GM12878 (cell line): ENCODE measurements at regions of chr3 and their contacts with region 1.

Region 1: GRCh38 chr3:184543843-184544512 is 17.6 kb upstream of the EPHB3 start:
- DNase-seq: no peak
- ATAC-seq: peak; percentile 88
- H3K4me3 ChIP-seq: no peak overlapping the region
- H3K27ac ChIP-seq: no peak overlapping the region
- H3K4me1 ChIP-seq: no peaks in the 10 kb centered on the region
- H3K27me3 ChIP-seq: peaks cover 0 to under 1% of the 10 kb centered on the region in 2 experiments; a peak in 2 of 4 replicates
- CTCF ChIP-seq: peak; percentile 74 to 83 (median 81)
- EP300 ChIP-seq: no peak
- POLR2A ChIP-seq: no peak
- RAD21 ChIP-seq: peak; percentile 73

Region 2: GRCh38 chr3:184171562-184172287 is 372.3 kb before region 1 on chr3:
- CTCF ChIA-PET with region 1: no interaction called
- POLR2A ChIA-PET with region 1: no interaction called
- RAD21 ChIA-PET with region 1: no interaction called
- SMC1A ChIA-PET with region 1: no interaction called
- in situ Hi-C with region 1: no loop called
- intact Hi-C with region 1: no loop called
- DNase-seq: no peak
- ATAC-seq: no peak
- H3K4me3 ChIP-seq: no peak overlapping the region
- H3K27ac ChIP-seq: no peak overlapping the region
- H3K4me1 ChIP-seq: peaks cover 5% of the 10 kb centered on the region
- H3K27me3 ChIP-seq: no peaks in the 10 kb centered on the region
- CTCF ChIP-seq: no peak
- EP300 ChIP-seq: no peak
- POLR2A ChIP-seq: no peak
- RAD21 ChIP-seq: no peak

Region 3: GRCh38 chr3:184371570-184372018 is 172.4 kb before region 1 on chr3:
- CTCF ChIA-PET with region 1: interaction called, 31 read pairs
- POLR2A ChIA-PET with region 1: no interaction called
- RAD21 ChIA-PET with region 1: interaction called, 14 read pairs
- SMC1A ChIA-PET with region 1: interaction called, 10 read pairs
- in situ Hi-C with region 1: no loop called
- intact Hi-C with region 1: loop called (anchors 1 kb)
- DNase-seq: no peak
- ATAC-seq: peak; percentile 99
- H3K4me3 ChIP-seq: no peak overlapping the region
- H3K27ac ChIP-seq: no peak overlapping the region
- H3K4me1 ChIP-seq: no peaks in the 10 kb centered on the region
- H3K27me3 ChIP-seq: peaks cover 0 to 6% of the 10 kb centered on the region in 2 experiments; a peak in 2 of 4 replicates
- CTCF ChIP-seq: peak; percentile 83 to 97 (median 97); a peak in 5 of 6 replicates
- EP300 ChIP-seq: no peak
- POLR2A ChIP-seq: no peak
- RAD21 ChIP-seq: peak; percentile 86

Region 4: GRCh38 chr3:184417619-184418327 is 126.2 kb before region 1 on chr3:
- CTCF ChIA-PET with region 1: no interaction called
- POLR2A ChIA-PET with region 1: no interaction called
- RAD21 ChIA-PET with region 1: no interaction called
- SMC1A ChIA-PET with region 1: no interaction called
- in situ Hi-C with region 1: no loop called
- intact Hi-C with region 1: loop called (anchors 5 kb)
- DNase-seq: peak; percentile 8
- ATAC-seq: peak; percentile 100
- H3K4me3 ChIP-seq: no peak overlapping the region
- H3K27ac ChIP-seq: no peak overlapping the region
- H3K4me1 ChIP-seq: no peaks in the 10 kb centered on the region
- H3K27me3 ChIP-seq: no peaks in the 10 kb centered on the region
- CTCF ChIP-seq: peak; percentile 88 to 95 (median 90)
- EP300 ChIP-seq: no peak
- POLR2A ChIP-seq: no peak
- RAD21 ChIP-seq: peak; percentile 77

Region 5: GRCh38 chr3:184469423-184469822 is 74.6 kb before region 1 on chr3:
- CTCF ChIA-PET with region 1: interaction called, 4 read pairs
- POLR2A ChIA-PET with region 1: no interaction called
- RAD21 ChIA-PET with region 1: no interaction called
- SMC1A ChIA-PET with region 1: interaction called, 3 read pairs
- in situ Hi-C with region 1: no loop called
- intact Hi-C with region 1: loop called (anchors 5 kb)
- DNase-seq: no peak
- ATAC-seq: peak; percentile 78
- H3K4me3 ChIP-seq: no peak overlapping the region
- H3K27ac ChIP-seq: no peak overlapping the region
- H3K4me1 ChIP-seq: no peaks in the 10 kb centered on the region
- H3K27me3 ChIP-seq: peaks cover 3 to 6% of the 10 kb centered on the region in 2 experiments; a peak in 3 of 4 replicates
- CTCF ChIP-seq: peak; percentile 40 to 59 (median 48)
- EP300 ChIP-seq: no peak
- POLR2A ChIP-seq: no peak
- RAD21 ChIP-seq: peak; percentile 31; the same call in 1 of the 2 replicates

Region 6: GRCh38 chr3:184777336-184778004 is 233.5 kb after region 1 on chr3:
- CTCF ChIA-PET with region 1: interaction called, 4 read pairs
- POLR2A ChIA-PET with region 1: no interaction called
- RAD21 ChIA-PET with region 1: interaction called, 3 read pairs
- SMC1A ChIA-PET with region 1: interaction called, 3 read pairs
- in situ Hi-C with region 1: no loop called
- intact Hi-C with region 1: loop called (anchors 1 kb)
- DNase-seq: peak; percentile 30
- ATAC-seq: peak; percentile 98
- H3K4me3 ChIP-seq: no peak overlapping the region
- H3K27ac ChIP-seq: no peak overlapping the region
- H3K4me1 ChIP-seq: no peaks in the 10 kb centered on the region
- H3K27me3 ChIP-seq: no peaks in the 10 kb centered on the region; a peak in 1 of 4 replicates
- CTCF ChIP-seq: peak; percentile 73 to 86 (median 79)
- EP300 ChIP-seq: no peak
- POLR2A ChIP-seq: no peak
- RAD21 ChIP-seq: peak; percentile 96